GM10248 (cell line): ENCODE measurements at regions of chr11 and their contacts with region 1.

Region 1: DNA sequence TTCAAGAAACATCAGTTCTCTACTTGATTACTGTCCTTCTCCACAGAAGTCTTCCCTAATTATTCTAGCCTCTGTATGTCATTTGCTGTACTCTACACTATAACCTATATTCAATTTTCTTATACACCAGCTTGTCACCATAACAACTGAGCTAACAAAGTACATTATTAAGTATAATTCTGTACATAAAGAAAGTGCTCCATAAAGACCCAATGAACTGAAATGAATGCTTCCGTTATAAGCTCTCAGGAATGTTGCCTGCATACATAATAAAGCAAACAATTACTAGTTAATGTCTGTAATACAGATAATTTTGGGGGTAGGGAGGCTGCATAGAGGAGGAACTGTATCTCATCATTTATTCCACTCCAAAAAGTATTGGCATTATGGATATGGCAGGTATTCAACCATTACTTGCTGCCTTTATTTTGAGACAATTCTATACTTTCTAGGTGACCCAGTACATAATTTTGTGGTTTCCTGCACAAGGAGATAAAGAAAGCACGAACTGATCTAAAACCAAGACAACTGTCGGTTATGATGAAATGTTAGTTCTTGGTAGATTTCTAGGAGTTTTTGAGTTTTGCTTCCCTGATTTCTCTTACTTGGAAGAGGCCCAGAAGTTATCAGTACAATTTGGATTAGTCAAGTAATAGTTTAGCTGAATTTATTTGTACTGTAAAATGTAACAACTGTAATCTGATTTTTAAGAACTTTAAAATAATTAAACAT is 202.5 kb downstream of the SBF2 start:
- DNase-seq: no peak
- CTCF ChIP-seq: no peak

Region 2: GRCh38 chr11:10076458-10077141 is 14.9 kb before region 1 on chr11:
- CTCF ChIA-PET with region 1: interaction called, 15 read pairs
- POLR2A ChIA-PET with region 1: no interaction called
- DNase-seq: peak; percentile 60
- CTCF ChIP-seq: peak; percentile 73